MCF 10A (cell line): ENCODE measurements at regions of chr4 and their contacts with region 1.

Region 1: DNA sequence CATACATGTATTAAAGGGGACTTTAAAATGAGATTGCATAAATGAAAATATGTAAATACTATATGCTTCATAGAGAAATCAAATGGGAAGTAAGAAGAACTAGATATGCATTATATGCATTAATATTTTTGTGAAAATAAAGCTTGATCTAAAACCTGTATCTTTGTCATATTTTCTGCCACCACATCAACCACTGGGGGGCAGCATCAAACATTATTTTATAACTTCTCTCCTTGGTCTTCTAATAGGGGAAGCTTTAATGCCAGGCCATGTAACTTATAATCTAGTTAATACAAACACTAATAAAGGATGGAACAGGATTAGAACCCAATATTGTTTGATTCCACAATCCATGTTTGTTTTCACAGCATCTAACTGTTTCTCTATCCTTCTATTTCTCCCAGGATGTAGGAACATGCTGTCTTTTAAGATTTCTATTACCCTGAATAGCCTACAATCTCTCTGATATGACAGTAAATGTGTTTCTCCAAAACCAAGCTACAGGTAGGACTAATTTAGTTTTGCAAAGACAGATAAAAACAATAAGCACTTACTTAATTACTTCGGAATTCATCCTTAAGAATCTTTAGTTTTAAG is 10.0 kb downstream of the QRFPR start:
- DNase-seq: peak; percentile 68
- H3K4me3 Mint-ChIP-seq: no peak overlapping the region
- H3K27ac Mint-ChIP-seq: no peak overlapping the region
- H3K4me1 Mint-ChIP-seq: peaks cover 26% of the 10 kb centered on the region
- H3K27me3 Mint-ChIP-seq: no peaks in the 10 kb centered on the region
- CTCF ChIP-seq: peak; percentile 46

Region 2: DNA sequence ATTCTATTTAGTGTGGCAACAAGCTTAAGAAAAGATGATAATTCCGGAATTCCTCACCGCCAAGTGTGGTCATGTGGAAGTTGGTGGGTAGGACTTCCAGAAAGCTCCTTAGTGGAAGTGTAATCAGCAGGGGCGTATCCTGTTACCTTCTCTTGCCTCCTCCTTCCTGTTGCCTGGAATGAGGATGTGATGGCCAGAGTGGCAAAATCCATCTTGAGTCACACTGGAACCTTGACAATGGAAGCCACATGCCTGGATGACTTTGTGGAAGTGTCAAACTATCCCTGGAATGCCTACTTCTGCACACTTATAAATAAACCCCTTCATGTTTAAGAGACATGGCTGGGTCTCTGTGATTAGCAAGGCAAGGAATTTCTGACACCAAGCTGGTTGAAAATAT is 639.3 kb before region 1 on chr4:
- CTCF ChIA-PET with region 1: no interaction called
- POLR2A ChIA-PET with region 1: no interaction called
- intact Hi-C with region 1: no loop called
- DNase-seq: no peak
- H3K4me3 Mint-ChIP-seq: no peak overlapping the region
- H3K27ac Mint-ChIP-seq: no peak overlapping the region
- H3K4me1 Mint-ChIP-seq: no peaks in the 10 kb centered on the region
- H3K27me3 Mint-ChIP-seq: no peaks in the 10 kb centered on the region
- CTCF ChIP-seq: no peak

Region 3: GRCh38 chr4:121185960-121186359 is 184.9 kb before region 1 on chr4:
- CTCF ChIA-PET with region 1: no interaction called
- POLR2A ChIA-PET with region 1: no interaction called
- intact Hi-C with region 1: no loop called
- DNase-seq: no peak
- H3K4me3 Mint-ChIP-seq: no peak overlapping the region
- H3K27ac Mint-ChIP-seq: no peak overlapping the region
- H3K4me1 Mint-ChIP-seq: peaks cover 5% of the 10 kb centered on the region
- H3K27me3 Mint-ChIP-seq: no peaks in the 10 kb centered on the region
- CTCF ChIP-seq: no peak

Region 4: GRCh38 chr4:121252224-121252806 is 118.5 kb before region 1 on chr4:
- CTCF ChIA-PET with region 1: interaction called, 3 read pairs
- POLR2A ChIA-PET with region 1: no interaction called
- intact Hi-C with region 1: loop called (anchors 5 kb)
- DNase-seq: peak; percentile 85
- H3K4me3 Mint-ChIP-seq: no peak overlapping the region
- H3K27ac Mint-ChIP-seq: no peak overlapping the region
- H3K4me1 Mint-ChIP-seq: peaks cover 14% of the 10 kb centered on the region
- H3K27me3 Mint-ChIP-seq: no peaks in the 10 kb centered on the region
- CTCF ChIP-seq: peak; percentile 66

Region 5: DNA sequence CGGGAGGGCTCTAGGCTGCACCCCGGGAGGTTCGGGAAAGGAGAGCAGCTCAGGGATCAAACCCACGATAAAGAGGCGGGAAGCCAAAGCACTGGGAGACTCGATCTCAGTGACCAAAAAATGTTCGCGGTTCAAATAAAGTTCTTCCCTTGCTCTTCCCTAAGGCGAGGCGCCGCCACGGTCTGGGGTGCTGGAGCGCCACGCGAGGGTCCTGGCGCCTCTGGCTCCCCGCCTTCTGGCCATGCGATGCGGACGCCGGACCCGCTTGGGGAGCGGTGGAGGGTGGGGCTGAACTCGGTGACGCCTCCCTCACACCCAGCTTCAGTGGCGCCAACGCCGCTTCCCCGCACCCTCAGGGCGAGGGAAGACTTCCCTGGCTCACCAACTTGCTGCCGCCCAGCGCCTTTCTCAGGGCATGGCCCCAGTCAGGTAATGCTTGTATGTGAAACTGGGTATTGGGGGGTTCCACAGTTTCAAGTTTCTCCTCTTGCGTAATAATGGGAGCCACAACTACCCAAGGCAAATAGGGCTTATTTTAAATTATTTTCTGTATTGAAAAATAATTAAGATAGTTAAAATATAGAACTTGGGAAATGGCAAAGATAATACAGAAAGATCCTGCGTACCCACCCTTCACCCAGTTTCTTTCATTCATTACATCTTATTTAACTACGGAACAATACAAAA is 10.1 kb after region 1 on chr4 and contains the start of gene QRFPR:
- CTCF ChIA-PET with region 1: interaction called, 34 read pairs
- POLR2A ChIA-PET with region 1: interaction called, 14 read pairs
- intact Hi-C with region 1: no loop called
- DNase-seq: peak; percentile 88
- H3K4me3 Mint-ChIP-seq: peak within 1 kb of the TSS; percentile 81
- H3K27ac Mint-ChIP-seq: peak within 1 kb of the TSS; percentile 40
- H3K4me1 Mint-ChIP-seq: peaks cover 21% of the 10 kb centered on the region
- H3K27me3 Mint-ChIP-seq: no peaks in the 10 kb centered on the region
- CTCF ChIP-seq: peak; percentile 6
- total RNA-seq, gene QRFPR: 6.5 and 8.4 TPM in 2 replicates

Region 6: GRCh38 chr4:121454251-121454979 is 83.6 kb after region 1 on chr4:
- CTCF ChIA-PET with region 1: interaction called, 10 read pairs
- POLR2A ChIA-PET with region 1: no interaction called
- intact Hi-C with region 1: no loop called
- DNase-seq: no peak
- H3K4me3 Mint-ChIP-seq: no peak overlapping the region
- H3K27ac Mint-ChIP-seq: no peak overlapping the region
- H3K4me1 Mint-ChIP-seq: no peaks in the 10 kb centered on the region
- H3K27me3 Mint-ChIP-seq: peaks cover 16% of the 10 kb centered on the region
- CTCF ChIP-seq: no peak

Region 7: DNA sequence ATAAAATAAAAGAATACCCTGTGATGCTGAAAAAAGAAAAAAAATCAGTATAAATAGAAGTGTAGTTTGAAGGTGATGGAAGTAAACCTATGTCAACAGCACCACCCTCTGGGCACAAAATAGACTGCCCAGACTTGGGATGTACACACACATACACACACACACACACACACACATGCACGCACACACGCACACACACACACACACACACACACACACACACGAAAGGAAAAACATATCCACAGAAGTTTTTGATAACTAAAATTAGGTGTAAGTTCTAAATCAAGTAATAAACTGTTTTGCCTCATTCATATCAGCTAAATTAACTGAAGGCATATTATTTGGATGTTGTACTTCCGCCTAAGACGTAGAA is 285.4 kb after region 1 on chr4:
- CTCF ChIA-PET with region 1: interaction called, 11 read pairs
- POLR2A ChIA-PET with region 1: interaction called, 6 read pairs
- intact Hi-C with region 1: loop called (anchors 2 kb)
- DNase-seq: peak; percentile 66
- H3K4me3 Mint-ChIP-seq: no peak overlapping the region
- H3K27ac Mint-ChIP-seq: no peak overlapping the region
- H3K4me1 Mint-ChIP-seq: peaks cover 8% of the 10 kb centered on the region
- H3K27me3 Mint-ChIP-seq: no peaks in the 10 kb centered on the region
- CTCF ChIP-seq: peak; percentile 30